ENCODE measurements at regions of chr6 and their contacts with region 1.

Region 1: GRCh38 chr6:136289579-136290409 is at the start of gene BCLAF1:
- DNase-seq: peak; percentile 100
- H3K4me3 ChIP-seq: peak within 1 kb of the TSS; percentile 67 to 86 (median 76)
- H3K27ac ChIP-seq: peak within 1 kb of the TSS; percentile 98 to 99 (median 99)
- H3K4me1 ChIP-seq: peaks cover 17 to 48% (median 40%) of the 10 kb centered on the region in 4 donors
- H3K27me3 ChIP-seq: no peaks in the 10 kb centered on the region
- CTCF ChIP-seq: no peak
- EP300 ChIP-seq: peak; percentile 88
- POLR2A ChIP-seq: peak; percentile 99
- total RNA-seq, gene BCLAF1: 88.7 to 495 (median 174) TPM

Region 2: DNA sequence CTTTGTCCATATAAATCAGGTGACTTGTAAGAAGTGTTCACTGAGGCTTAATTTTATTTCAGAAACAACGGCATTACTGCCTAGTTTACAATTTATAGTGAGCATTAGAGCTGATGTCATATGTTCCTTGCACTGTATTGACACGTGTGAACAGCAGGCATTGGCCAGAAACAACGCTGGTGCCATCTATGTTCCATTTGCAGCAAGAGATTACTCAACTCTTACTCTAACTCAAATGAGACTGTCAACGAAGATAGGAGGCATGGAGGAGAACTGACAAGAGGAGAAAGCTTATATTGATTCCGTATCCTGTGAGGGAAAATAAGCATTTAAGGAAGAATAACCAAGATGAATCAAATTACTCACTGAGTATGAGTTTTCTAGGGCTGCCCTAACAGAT is 88.1 kb before region 1 on chr6:
- in situ Hi-C with region 1: no loop called
- intact Hi-C with region 1: no loop called
- DNase-seq: no peak
- H3K4me3 ChIP-seq: no peak overlapping the region
- H3K27ac ChIP-seq: no peak overlapping the region
- H3K4me1 ChIP-seq: no peaks in the 10 kb centered on the region
- H3K27me3 ChIP-seq: no peaks in the 10 kb centered on the region
- CTCF ChIP-seq: no peak
- EP300 ChIP-seq: no peak
- POLR2A ChIP-seq: no peak

Region 3: GRCh38 chr6:136503303-136504029 is 213.7 kb after region 1 on chr6:
- in situ Hi-C with region 1: no loop called
- intact Hi-C with region 1: no loop called
- DNase-seq: no peak
- H3K4me3 ChIP-seq: no peak overlapping the region
- H3K27ac ChIP-seq: no peak overlapping the region
- H3K4me1 ChIP-seq: no peaks in the 10 kb centered on the region
- H3K27me3 ChIP-seq: no peaks in the 10 kb centered on the region
- CTCF ChIP-seq: no peak
- EP300 ChIP-seq: no peak
- POLR2A ChIP-seq: no peak

Region 4: GRCh38 chr6:136792410-136793262 is 502.8 kb after region 1 on chr6 and contains the start of gene MAP3K5:
- in situ Hi-C with region 1: loop called in 1 of 4 experiments (anchors 25 kb)
- intact Hi-C with region 1: no loop called
- DNase-seq: peak; percentile 96
- H3K4me3 ChIP-seq: peak within 1 kb of the TSS; percentile 75 to 96 (median 86)
- H3K27ac ChIP-seq: peak within 1 kb of the TSS; percentile 95 to 99 (median 97)
- H3K4me1 ChIP-seq: peaks cover 0 to 42% (median 22%) of the 10 kb centered on the region in 4 donors
- H3K27me3 ChIP-seq: no peaks in the 10 kb centered on the region
- CTCF ChIP-seq: peak; percentile 67 to 83 (median 78)
- EP300 ChIP-seq: no peak
- POLR2A ChIP-seq: peak; percentile 71
- total RNA-seq, gene MAP3K5: 16.2 to 52.7 (median 34.8) TPM

Region 5: DNA sequence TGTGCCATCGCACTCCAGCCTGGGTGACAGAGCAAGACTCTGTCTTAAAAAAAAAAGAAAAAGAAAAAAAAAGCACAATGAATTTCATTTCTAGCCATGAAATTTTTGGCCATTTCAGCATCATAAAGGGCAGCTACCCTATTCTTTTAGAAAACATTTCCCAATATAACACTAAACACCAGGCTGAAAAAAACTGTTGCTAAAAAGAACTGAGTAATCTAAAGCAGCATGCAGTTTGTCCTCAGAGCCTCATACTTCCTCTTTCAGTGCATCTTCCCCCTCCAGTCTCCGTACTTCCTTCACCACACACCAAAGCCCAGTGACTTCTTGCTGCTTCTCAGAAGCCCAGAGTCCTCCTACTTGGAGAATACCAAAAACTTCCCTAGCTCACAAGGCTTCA is 935.0 kb after region 1 on chr6:
- in situ Hi-C with region 1: no loop called
- intact Hi-C with region 1: loop called (anchors 5 kb)
- DNase-seq: no peak
- H3K4me3 ChIP-seq: no peak overlapping the region
- H3K27ac ChIP-seq: peak overlapping the region; percentile 54 to 74 (median 64)
- H3K4me1 ChIP-seq: peaks cover 4 to 46% (median 8%) of the 10 kb centered on the region in 4 donors
- H3K27me3 ChIP-seq: no peaks in the 10 kb centered on the region
- CTCF ChIP-seq: no peak
- EP300 ChIP-seq: no peak
- POLR2A ChIP-seq: no peak

Measured in transverse colon (tissue), 4 donors.